Activated B cell treated with CpG ODN at 0.5 μM for 24 hours (primary cell): ENCODE measurements at regions of chr2 and their contacts with region 1.

Region 1: DNA sequence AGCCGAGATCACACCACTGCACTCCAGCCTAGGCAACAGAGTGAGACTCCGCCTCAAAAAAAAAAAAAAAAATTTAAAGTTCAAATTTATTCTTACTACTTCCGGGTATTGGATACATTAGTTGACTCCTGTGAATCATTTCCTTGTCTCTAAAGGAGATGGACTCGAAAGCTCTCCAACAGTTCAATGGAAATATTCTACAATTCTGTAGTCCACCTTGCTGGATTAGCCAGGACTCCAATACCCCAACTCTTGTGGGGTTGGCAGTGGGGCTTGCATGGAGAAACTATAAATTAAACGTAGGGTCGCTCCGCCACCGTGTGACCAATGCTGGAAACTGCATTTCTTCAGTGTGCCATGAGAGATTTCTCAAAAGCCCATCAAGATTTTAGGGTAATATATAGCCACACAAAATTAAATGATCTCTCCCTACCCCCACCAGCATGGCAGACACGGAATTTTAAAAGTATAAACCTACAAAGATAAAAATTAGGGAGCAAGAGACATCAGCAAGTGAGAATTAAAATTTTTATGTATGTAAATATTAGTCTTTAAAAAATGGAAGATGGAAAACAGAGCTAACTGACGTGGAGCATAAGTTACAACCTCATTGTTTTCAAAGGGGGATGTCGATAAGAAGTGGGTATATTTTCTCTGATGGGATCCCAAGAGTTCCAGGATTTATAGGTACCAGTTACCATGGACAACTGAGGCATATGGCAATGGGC is 27.8 kb upstream of the GAREM2 start:
- DNase-seq: peak; percentile 25
- ATAC-seq: peak; percentile 77
- H3K4me3 Mint-ChIP-seq: peak overlapping the region; percentile 46
- H3K27ac Mint-ChIP-seq: no peak overlapping the region
- H3K4me1 Mint-ChIP-seq: peaks cover 4% of the 10 kb centered on the region
- H3K27me3 Mint-ChIP-seq: peaks cover 10% of the 10 kb centered on the region
- CTCF ChIP-seq: no peak

Region 2: GRCh38 chr2:25951071-25951547 is 194.0 kb before region 1 on chr2:
- CTCF ChIA-PET with region 1: interaction called, 15 read pairs
- POLR2A ChIA-PET with region 1: no interaction called
- intact Hi-C with region 1: loop called (anchors 1 kb)
- DNase-seq: peak; percentile 51
- ATAC-seq: peak; percentile 86
- H3K4me3 Mint-ChIP-seq: no peak overlapping the region
- H3K27ac Mint-ChIP-seq: no peak overlapping the region
- H3K4me1 Mint-ChIP-seq: no peaks in the 10 kb centered on the region
- H3K27me3 Mint-ChIP-seq: no peaks in the 10 kb centered on the region
- CTCF ChIP-seq: peak; percentile 68

Region 3: GRCh38 chr2:26088032-26088643 is 57.0 kb before region 1 on chr2:
- CTCF ChIA-PET with region 1: no interaction called
- POLR2A ChIA-PET with region 1: no interaction called
- intact Hi-C with region 1: loop called (anchors 1 kb)
- DNase-seq: no peak
- ATAC-seq: peak; percentile 45
- H3K4me3 Mint-ChIP-seq: no peak overlapping the region
- H3K27ac Mint-ChIP-seq: no peak overlapping the region
- H3K4me1 Mint-ChIP-seq: peaks cover 53% of the 10 kb centered on the region
- H3K27me3 Mint-ChIP-seq: no peaks in the 10 kb centered on the region
- CTCF ChIP-seq: no peak

Region 4: DNA sequence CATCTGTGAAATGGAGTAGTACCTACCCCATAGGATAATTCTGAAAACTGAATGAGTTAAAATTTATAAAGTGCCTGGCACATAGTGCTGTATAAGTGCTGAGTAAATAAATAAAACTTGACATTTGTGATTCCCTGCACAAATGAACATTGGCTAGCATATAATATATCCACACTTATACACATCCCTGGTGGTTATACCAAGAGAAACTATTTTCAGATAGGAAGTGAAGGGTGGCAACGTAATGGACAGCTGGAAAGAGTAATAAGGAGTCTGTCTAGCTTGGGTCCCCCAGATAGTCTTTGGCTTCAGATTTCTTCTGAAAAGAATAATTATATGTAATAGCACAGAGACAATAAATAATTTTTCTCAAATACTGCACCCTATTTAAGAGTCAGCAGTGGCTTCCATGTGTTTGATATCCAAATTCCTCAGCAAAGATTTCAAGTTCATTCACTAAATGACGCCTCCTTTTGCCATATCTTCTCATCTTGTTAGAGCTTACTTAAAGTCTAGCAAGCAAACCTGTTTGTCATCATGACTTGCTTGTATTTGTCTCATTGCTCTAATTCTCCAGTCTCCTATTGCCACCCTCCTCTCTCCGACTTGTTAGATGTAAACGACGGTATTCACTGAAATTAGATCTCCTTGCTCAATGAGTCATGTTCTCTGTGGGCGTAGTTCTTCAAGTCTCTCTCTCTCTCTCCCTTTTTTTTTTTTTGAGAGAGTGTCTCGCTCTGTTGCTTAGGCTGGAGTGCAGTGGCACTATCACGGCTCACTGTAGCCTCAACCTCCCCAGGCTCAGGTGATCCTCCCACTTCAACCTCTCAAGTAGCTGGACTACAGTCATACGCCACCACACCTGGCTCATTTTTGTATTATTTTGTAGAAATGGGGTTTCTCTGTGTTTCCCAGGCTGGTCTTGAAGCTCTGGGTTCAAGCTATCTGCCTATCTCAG is 210.2 kb after region 1 on chr2:
- CTCF ChIA-PET with region 1: no interaction called
- POLR2A ChIA-PET with region 1: no interaction called
- intact Hi-C with region 1: no loop called
- DNase-seq: no peak
- ATAC-seq: no peak
- H3K4me3 Mint-ChIP-seq: no peak overlapping the region
- H3K27ac Mint-ChIP-seq: no peak overlapping the region
- H3K4me1 Mint-ChIP-seq: peaks cover 7% of the 10 kb centered on the region
- H3K27me3 Mint-ChIP-seq: no peaks in the 10 kb centered on the region
- CTCF ChIP-seq: no peak